ENCODE measurements at regions of chr21 and their contacts with region 1.

Region 1: DNA sequence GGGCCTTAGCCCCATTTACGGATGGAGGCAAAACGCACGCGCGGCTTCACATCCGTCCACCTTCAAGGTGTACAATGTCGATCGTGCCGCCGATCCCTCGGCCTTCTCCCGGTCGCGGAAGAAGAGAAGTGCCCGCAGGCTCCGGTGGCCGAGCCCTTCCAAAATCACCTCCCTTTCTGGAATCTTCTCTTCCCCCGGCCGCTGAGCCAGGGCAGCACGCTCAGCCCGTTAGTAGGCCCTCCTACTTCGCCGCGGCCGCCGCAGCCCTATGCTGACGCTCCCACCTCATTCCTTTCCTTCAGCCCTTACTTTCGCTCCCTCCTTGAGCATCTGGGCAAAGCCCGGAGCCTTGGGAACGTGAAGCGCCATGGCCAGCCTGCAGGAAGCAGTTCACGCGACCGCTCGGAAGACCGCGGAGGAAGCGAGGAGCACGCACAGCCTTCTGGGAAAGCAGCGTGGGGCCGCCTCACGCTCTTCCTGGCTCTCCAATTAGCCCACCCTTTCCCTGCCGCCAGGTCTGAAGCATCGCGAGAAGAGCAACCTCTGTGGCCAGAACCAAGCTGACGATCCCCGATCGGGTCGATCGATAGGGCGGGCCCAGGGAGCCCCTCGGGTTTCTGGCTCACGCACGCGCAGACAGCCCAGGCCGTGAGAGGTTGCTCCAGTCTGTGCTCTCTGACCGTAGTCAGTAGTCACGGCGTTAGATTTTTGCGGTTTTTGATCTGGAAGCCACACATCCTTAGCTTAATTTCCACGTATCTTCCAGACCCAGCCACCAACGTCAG is at the start of gene CCT8:
- DNase-seq: peak; percentile 96 to 100 (median 98)
- ATAC-seq: peak; percentile 88
- H3K4me3 ChIP-seq: peak within 1 kb of the TSS; percentile 87
- H3K4me3 Mint-ChIP-seq: peak within 1 kb of the TSS; percentile 97
- H3K27ac ChIP-seq: peak within 1 kb of the TSS; percentile 88 to 89
- H3K27ac Mint-ChIP-seq: peak within 1 kb of the TSS; percentile 95
- H3K4me1 ChIP-seq: peaks cover 25% of the 10 kb centered on the region
- H3K4me1 Mint-ChIP-seq: peaks cover 68% of the 10 kb centered on the region
- H3K27me3 ChIP-seq: no peaks in the 10 kb centered on the region
- H3K27me3 Mint-ChIP-seq: no peaks in the 10 kb centered on the region
- CTCF ChIP-seq: no peak
- total RNA-seq, gene CCT8: 121 to 126 TPM

Region 2: DNA sequence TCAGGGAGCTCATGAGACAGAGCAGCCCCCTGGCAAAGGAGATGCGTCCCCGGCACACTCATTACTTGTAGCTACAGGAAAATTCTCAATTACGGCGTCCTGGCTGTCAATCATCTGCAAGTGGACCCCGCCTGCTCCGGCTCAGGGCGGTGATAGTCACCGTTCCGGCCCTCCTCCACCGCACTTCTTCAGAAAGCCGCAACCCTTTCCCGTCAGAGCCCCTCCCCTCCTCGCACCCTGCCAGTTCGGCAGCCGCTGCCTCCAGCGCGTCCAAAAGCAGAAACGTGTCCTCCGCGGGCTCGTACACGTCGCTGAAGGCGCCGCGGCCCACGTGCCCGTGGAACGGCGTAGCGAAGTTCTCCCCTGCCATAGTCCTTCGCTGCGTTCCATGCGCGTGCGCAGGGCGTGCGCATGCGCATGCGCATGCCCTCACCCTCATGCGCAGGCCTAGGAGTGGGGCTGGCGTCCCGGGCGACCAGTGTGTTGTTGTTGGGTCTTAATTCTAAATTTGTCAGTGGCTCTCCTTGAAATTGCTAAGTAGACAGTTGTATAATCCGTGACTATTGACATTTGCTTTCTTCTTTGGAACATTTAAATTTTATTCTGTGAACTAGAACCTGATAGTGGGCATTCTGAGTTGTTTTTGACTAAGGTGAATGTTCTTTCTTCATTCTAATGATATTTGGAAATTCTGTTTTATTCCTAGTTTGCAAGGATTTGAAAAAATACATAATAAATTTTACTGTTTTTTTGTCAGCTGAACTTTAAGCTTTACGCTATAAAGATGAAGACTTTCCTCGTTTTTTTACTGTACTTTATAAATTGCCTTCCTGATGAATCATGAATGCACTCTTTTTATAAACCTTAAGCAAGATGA is 188.2 kb before region 1 on chr21:
- CTCF ChIA-PET with region 1: no interaction called
- POLR2A ChIA-PET with region 1: no interaction called
- intact Hi-C with region 1: loop called (anchors 2 kb)
- DNase-seq: peak; percentile 81 to 98 (median 90)
- ATAC-seq: peak; percentile 94
- H3K4me3 ChIP-seq: peak overlapping the region; percentile 62
- H3K4me3 Mint-ChIP-seq: peak overlapping the region; percentile 93
- H3K27ac ChIP-seq: peak overlapping the region; percentile 88 to 91
- H3K27ac Mint-ChIP-seq: peak overlapping the region; percentile 97
- H3K4me1 ChIP-seq: peaks cover 11% of the 10 kb centered on the region
- H3K4me1 Mint-ChIP-seq: peaks cover 23% of the 10 kb centered on the region
- H3K27me3 ChIP-seq: no peaks in the 10 kb centered on the region
- H3K27me3 Mint-ChIP-seq: no peaks in the 10 kb centered on the region
- CTCF ChIP-seq: no peak

Region 3: DNA sequence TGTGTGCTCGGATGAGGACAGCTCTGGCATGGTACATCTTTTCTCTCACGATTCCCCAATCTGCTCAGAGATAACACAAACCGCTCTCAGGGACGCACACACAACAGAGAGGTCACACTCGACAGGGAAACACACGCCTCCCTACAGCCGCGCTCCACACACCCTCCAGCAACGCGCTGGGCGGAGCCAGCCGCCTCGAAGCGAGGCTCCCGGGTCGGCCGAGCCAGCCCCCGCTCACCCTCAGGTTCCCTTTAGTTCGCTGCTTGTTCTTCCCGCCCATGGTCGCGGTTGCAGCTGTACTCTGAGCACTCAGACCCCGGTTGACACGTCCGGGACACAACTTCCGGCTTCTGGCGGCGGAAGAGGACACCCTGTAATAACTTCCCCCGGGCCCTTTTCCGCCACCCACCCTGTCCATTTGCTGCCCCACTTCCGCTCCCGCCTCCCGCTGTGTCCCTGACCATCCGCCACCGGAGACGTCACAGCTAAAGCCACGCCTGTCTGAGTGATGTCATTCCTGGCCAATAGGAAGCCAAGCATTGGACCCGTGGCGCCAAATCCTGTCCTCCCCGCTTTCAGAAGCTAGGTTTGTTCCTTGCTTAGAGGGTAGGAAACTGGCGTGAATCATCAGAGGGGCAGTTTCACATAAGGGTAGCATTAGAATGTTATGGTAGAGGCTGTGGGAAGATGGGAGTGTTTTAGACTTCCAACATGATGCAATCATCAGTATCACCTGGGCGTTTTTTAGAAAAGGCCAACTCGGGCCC is 80.7 kb before region 1 on chr21 and contains the start of gene LTN1:
- CTCF ChIA-PET with region 1: interaction called, 3 read pairs
- POLR2A ChIA-PET with region 1: interaction called, 16 read pairs
- intact Hi-C with region 1: loop called (anchors 1 to 2 kb)
- DNase-seq: peak; percentile 97 to 100 (median 98)
- ATAC-seq: peak; percentile 91
- H3K4me3 ChIP-seq: peak within 1 kb of the TSS; percentile 95
- H3K4me3 Mint-ChIP-seq: peak within 1 kb of the TSS; percentile 97
- H3K27ac ChIP-seq: peak within 1 kb of the TSS; percentile 75 to 94
- H3K27ac Mint-ChIP-seq: peak within 1 kb of the TSS; percentile 91
- H3K4me1 ChIP-seq: peaks cover 22% of the 10 kb centered on the region
- H3K4me1 Mint-ChIP-seq: peaks cover 39% of the 10 kb centered on the region
- H3K27me3 ChIP-seq: no peaks in the 10 kb centered on the region
- H3K27me3 Mint-ChIP-seq: no peaks in the 10 kb centered on the region
- CTCF ChIP-seq: no peak
- total RNA-seq, gene LTN1: 23.6 to 24.3 TPM

Region 4: GRCh38 chr21:29002442-29003144 is 70.8 kb before region 1 on chr21:
- CTCF ChIA-PET with region 1: no interaction called
- POLR2A ChIA-PET with region 1: interaction called, 55 read pairs
- intact Hi-C with region 1: loop called in 1 of 2 experiments (anchors 2 kb)
- DNase-seq: peak; percentile 91 to 99 (median 94)
- ATAC-seq: peak; percentile 100
- H3K4me3 ChIP-seq: peak overlapping the region; percentile 65
- H3K4me3 Mint-ChIP-seq: peak overlapping the region; percentile 88
- H3K27ac ChIP-seq: peak overlapping the region; percentile 88 to 95
- H3K27ac Mint-ChIP-seq: peak overlapping the region; percentile 97
- H3K4me1 ChIP-seq: peaks cover 13% of the 10 kb centered on the region
- H3K4me1 Mint-ChIP-seq: peaks cover 20% of the 10 kb centered on the region
- H3K27me3 ChIP-seq: no peaks in the 10 kb centered on the region
- H3K27me3 Mint-ChIP-seq: no peaks in the 10 kb centered on the region
- CTCF ChIP-seq: no peak

Region 5: GRCh38 chr21:29018540-29018939 is 54.9 kb before region 1 on chr21:
- CTCF ChIA-PET with region 1: no interaction called
- POLR2A ChIA-PET with region 1: interaction called, 71 read pairs
- intact Hi-C with region 1: no loop called
- DNase-seq: peak in 1 of 14 experiments; percentile 16
- ATAC-seq: peak; percentile 7
- H3K4me3 ChIP-seq: peak overlapping the region; percentile 94
- H3K4me3 Mint-ChIP-seq: peak overlapping the region; percentile 92
- H3K27ac ChIP-seq: peak overlapping the region; percentile 82 to 85
- H3K27ac Mint-ChIP-seq: peak overlapping the region; percentile 93
- H3K4me1 ChIP-seq: peaks cover 40% of the 10 kb centered on the region
- H3K4me1 Mint-ChIP-seq: peaks cover 35% of the 10 kb centered on the region
- H3K27me3 ChIP-seq: no peaks in the 10 kb centered on the region
- H3K27me3 Mint-ChIP-seq: no peaks in the 10 kb centered on the region
- CTCF ChIP-seq: no peak

Region 6: DNA sequence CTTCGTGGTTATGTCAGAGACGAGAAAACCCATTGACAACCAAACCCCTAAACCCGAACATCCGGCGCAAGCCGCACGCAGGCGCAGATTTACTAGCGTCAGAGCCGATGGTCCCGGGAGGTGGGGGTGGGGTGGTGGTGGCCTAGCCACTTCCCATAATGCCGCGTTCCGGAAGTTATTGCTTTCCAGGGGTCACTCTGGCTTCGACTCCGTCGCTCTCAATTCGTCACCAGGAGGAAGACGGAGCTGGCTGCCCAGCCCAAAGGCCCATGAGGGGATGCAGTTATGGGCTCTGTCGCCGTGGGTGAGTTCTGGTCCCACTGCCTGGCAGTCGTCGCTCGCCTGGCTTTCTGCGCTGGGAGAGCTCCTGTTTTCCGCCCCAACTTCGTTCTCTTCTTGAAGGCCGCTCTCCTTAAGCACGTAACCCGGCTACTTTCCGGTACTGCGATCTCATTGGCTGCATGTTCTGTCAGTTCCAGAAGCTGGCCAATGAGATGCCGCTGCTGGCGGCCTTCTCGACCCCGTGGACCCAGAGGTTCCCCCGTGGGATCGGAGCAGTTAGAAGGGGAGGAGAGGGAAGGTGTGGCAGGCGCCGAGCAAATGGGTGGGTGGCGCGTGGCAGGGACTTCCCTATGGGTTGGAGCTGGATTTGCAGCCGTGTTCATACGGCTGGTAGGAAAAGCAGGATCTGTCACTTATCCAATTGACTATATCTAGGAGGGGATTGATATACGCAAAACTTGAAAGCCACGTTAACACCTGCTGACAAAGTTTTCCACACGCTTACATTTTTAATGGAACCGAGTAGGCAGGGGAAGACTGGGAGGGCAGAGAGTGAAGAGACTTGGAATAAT is 48.7 kb before region 1 on chr21 and contains the start of gene USP16:
- CTCF ChIA-PET with region 1: interaction called, 5 read pairs
- POLR2A ChIA-PET with region 1: interaction called, 71 read pairs
- intact Hi-C with region 1: loop called (anchors 1 to 2 kb)
- DNase-seq: peak; percentile 86 to 98 (median 90)
- ATAC-seq: peak; percentile 87
- H3K4me3 ChIP-seq: peak within 1 kb of the TSS; percentile 78
- H3K4me3 Mint-ChIP-seq: peak within 1 kb of the TSS; percentile 97
- H3K27ac ChIP-seq: peak within 1 kb of the TSS; percentile 97
- H3K27ac Mint-ChIP-seq: peak within 1 kb of the TSS; percentile 99
- H3K4me1 ChIP-seq: peaks cover 44% of the 10 kb centered on the region
- H3K4me1 Mint-ChIP-seq: peaks cover 61% of the 10 kb centered on the region
- H3K27me3 ChIP-seq: no peaks in the 10 kb centered on the region
- H3K27me3 Mint-ChIP-seq: no peaks in the 10 kb centered on the region
- CTCF ChIP-seq: no peak
- total RNA-seq, gene USP16: 79.7 to 81.7 TPM

Region 7: GRCh38 chr21:29124645-29125044 is 51.2 kb after region 1 on chr21:
- CTCF ChIA-PET with region 1: no interaction called
- POLR2A ChIA-PET with region 1: no interaction called
- intact Hi-C with region 1: no loop called
- DNase-seq: no peak
- ATAC-seq: no peak
- H3K4me3 ChIP-seq: no peak overlapping the region
- H3K4me3 Mint-ChIP-seq: no peak overlapping the region
- H3K27ac ChIP-seq: no peak overlapping the region
- H3K27ac Mint-ChIP-seq: no peak overlapping the region
- H3K4me1 ChIP-seq: no peaks in the 10 kb centered on the region
- H3K4me1 Mint-ChIP-seq: no peaks in the 10 kb centered on the region
- H3K27me3 ChIP-seq: no peaks in the 10 kb centered on the region
- H3K27me3 Mint-ChIP-seq: no peaks in the 10 kb centered on the region
- CTCF ChIP-seq: no peak

Region 8: GRCh38 chr21:29449306-29449950 is 376.0 kb after region 1 on chr21:
- CTCF ChIA-PET with region 1: no interaction called
- POLR2A ChIA-PET with region 1: interaction called, 14 read pairs
- intact Hi-C with region 1: no loop called
- DNase-seq: peak in 5 of 14 experiments; percentile 11 to 87 (median 63)
- ATAC-seq: peak; percentile 86
- H3K4me3 ChIP-seq: peak overlapping the region; percentile 1
- H3K4me3 Mint-ChIP-seq: peak overlapping the region; percentile 39
- H3K27ac ChIP-seq: peak overlapping the region; percentile 56 to 67
- H3K27ac Mint-ChIP-seq: peak overlapping the region; percentile 94
- H3K4me1 ChIP-seq: peaks cover 14% of the 10 kb centered on the region
- H3K4me1 Mint-ChIP-seq: peaks cover 40% of the 10 kb centered on the region
- H3K27me3 ChIP-seq: no peaks in the 10 kb centered on the region
- H3K27me3 Mint-ChIP-seq: no peaks in the 10 kb centered on the region
- CTCF ChIP-seq: peak; percentile 15

Region 9: GRCh38 chr21:29870814-29871213 is 797.4 kb after region 1 on chr21:
- CTCF ChIA-PET with region 1: no interaction called
- POLR2A ChIA-PET with region 1: no interaction called
- intact Hi-C with region 1: no loop called
- DNase-seq: no peak
- ATAC-seq: no peak
- H3K4me3 ChIP-seq: no peak overlapping the region
- H3K4me3 Mint-ChIP-seq: no peak overlapping the region
- H3K27ac ChIP-seq: no peak overlapping the region
- H3K27ac Mint-ChIP-seq: no peak overlapping the region
- H3K4me1 ChIP-seq: no peaks in the 10 kb centered on the region
- H3K4me1 Mint-ChIP-seq: no peaks in the 10 kb centered on the region
- H3K27me3 ChIP-seq: no peaks in the 10 kb centered on the region
- H3K27me3 Mint-ChIP-seq: peaks cover 16% of the 10 kb centered on the region
- CTCF ChIP-seq: no peak